Upper lobe of right lung (tissue), 1 donor: ENCODE measurements at regions of chr11 and their contacts with region 1.

Region 1: DNA sequence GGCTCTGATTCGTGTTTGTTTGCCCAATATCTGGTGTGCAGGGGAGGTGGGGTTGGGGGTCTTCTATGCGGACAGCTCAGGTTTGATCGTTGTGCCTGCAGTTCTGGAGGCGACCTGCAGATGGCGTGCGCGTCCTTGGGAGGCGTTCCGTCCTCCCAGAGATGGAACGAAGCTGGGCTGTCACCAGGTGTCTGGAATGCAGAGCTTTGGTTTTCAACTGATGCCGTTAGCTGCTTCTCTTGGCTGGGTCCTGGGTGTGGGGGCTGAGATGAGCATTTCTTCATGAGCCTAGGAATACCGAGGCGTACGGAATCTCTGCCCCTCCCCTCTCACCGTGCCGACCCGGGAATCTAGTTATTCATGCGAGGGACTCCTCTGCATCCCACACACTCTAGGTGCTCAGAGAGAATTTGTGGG is 98.6 kb downstream of the CEP164 start:
- DNase-seq: peak; percentile 83
- ATAC-seq: peak; percentile 81
- H3K4me3 ChIP-seq: no peak overlapping the region
- H3K27ac ChIP-seq: no peak overlapping the region
- H3K4me1 ChIP-seq: no peaks in the 10 kb centered on the region
- H3K27me3 ChIP-seq: no peaks in the 10 kb centered on the region
- CTCF ChIP-seq: peak; percentile 95

Region 2: GRCh38 chr11:117535261-117535781 is 109.0 kb after region 1 on chr11:
- intact Hi-C with region 1: no loop called
- DNase-seq: no peak
- ATAC-seq: peak; percentile 83
- H3K4me3 ChIP-seq: no peak overlapping the region
- H3K27ac ChIP-seq: no peak overlapping the region
- H3K4me1 ChIP-seq: no peaks in the 10 kb centered on the region
- H3K27me3 ChIP-seq: no peaks in the 10 kb centered on the region
- CTCF ChIP-seq: no peak

Region 3: DNA sequence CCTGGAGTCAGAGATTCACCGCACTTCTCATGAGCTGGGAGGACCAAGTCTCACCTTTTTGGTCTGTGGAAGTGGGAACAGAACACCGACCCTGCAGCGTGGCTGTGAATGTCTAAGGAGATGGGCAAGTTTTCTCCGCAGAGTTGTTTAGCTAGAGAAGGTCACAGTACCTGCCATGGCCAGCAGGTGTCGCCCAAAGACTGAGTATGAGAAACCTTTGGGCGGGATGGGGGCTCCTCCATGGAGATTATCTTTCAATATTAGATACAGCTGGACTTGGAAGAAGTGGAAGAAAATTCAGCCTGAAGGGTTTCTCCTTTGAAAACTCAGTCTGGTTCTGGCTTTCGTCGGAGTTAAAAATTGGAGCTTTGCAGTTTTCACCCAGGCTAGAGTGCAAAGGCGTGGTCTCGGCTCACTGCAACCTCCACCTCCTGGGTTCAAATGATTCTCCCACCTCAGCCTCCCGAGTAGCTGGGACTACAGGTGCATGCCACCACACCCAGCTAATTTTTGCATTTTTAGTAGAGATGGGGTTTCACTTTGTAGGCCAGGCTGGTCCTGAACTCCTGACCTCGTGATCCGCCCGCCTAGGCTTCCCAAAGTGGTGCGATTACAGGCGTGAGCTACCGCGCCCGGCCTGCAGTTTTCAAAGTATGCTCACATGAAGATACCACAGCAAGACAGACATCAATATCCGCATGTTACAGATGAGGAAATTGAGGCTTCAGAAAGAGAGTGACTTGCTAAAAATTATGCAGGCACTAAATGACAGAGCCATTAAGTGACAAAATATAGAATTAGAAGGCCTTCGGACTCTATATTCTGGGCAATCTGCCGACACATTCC is 381.4 kb after region 1 on chr11:
- intact Hi-C with region 1: loop called (anchors 10 kb)
- DNase-seq: peak; percentile 86
- ATAC-seq: peak; percentile 79
- H3K4me3 ChIP-seq: no peak overlapping the region
- H3K27ac ChIP-seq: no peak overlapping the region
- H3K4me1 ChIP-seq: peaks cover 11% of the 10 kb centered on the region
- H3K27me3 ChIP-seq: no peaks in the 10 kb centered on the region
- CTCF ChIP-seq: peak; percentile 96